ENCODE measurements at regions of chr11 and their contacts with region 1.

Region 1: DNA sequence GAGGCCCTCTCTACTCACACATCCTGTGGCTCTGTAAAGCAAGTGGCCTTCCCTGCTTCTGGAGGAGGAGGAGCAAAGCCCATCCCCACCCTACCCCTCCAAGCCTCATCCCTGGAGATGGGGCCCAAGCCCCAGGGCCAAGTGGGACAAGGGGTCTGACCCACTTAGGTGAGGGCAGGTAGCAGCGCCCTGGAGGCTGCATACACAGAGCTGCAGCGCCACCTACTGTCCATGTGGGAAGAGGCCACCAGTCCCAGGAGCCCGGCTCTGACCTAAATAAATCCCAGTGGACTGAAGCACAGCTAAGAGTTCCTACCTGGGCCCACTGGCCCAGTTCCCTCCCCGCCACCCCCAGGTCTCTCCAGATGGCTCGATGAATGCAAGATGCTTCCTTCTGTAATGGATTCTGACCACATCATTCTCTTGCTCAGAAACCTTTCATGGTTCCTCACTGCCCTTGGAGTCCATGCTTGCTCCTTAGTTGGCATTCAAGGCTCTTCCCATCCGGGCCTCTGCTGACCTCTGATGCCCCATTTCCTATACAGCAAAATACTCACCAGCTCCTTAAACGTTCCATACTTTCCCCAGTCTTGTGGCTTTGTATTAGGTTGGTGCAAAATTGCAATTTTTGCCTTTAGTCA is 62.1 kb downstream of the THAP12 start:
- DNase-seq: peak; percentile 89
- ATAC-seq: peak; percentile 97
- H3K4me3 ChIP-seq: no peak overlapping the region
- H3K27ac ChIP-seq: no peak overlapping the region
- H3K4me1 ChIP-seq: peaks cover 11% of the 10 kb centered on the region
- H3K27me3 ChIP-seq: no peaks in the 10 kb centered on the region
- CTCF ChIP-seq: peak; percentile 98

Region 2: GRCh38 chr11:75532200-75533048 is 786.4 kb before region 1 on chr11:
- CTCF ChIA-PET with region 1: no interaction called
- POLR2A ChIA-PET with region 1: interaction called, 25 read pairs
- intact Hi-C with region 1: no loop called
- DNase-seq: peak; percentile 93
- ATAC-seq: peak; percentile 52
- H3K4me3 ChIP-seq: no peak overlapping the region; the same call in 1 of the 2 replicates
- H3K27ac ChIP-seq: no peak overlapping the region
- H3K4me1 ChIP-seq: peaks cover 33% of the 10 kb centered on the region
- H3K27me3 ChIP-seq: no peaks in the 10 kb centered on the region
- CTCF ChIP-seq: peak; percentile 93

Region 3: DNA sequence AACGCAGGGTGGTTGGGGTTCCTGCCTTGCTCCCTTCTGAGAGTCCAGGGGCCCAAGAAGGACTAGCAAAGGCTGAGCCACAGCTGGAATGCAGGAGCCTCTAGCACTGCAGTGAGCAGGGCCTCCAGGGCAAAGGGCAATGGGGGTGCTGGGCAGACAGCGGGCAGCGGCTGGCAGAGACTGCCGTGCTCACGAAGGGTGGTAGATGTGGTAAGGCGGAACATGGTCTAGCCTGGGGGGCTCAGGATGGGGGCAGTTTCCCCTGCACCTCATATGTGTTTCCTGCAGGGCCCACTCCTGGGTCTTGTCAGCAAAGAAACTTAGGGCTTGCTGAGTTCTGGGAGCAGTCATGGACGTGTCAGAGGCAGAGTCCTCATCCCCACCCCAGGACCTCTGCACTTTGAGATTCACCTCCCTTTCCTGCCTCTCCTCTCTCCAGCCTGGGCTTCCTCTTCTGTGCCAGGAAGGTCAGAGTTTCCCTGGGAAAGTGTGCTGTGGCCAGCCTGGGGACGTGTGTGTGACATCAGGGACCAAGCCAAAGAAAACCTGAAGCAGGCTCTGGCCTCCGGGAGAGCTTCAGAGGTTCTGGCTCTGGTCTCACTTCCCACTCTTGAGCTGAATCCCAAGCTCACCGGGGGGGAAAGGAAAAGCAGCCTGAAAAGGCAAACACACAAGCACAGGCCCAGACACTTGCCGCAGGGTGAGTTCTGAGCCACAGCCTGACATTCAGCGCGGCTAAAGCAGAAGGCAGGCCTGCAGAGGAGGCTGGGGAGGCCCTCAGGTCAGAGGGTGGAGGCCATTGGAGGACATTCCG is 596.8 kb before region 1 on chr11:
- CTCF ChIA-PET with region 1: no interaction called
- POLR2A ChIA-PET with region 1: no interaction called
- intact Hi-C with region 1: loop called (anchors 2 kb)
- DNase-seq: no peak
- ATAC-seq: no peak
- H3K4me3 ChIP-seq: no peak overlapping the region
- H3K27ac ChIP-seq: no peak overlapping the region
- H3K4me1 ChIP-seq: no peaks in the 10 kb centered on the region
- H3K27me3 ChIP-seq: no peaks in the 10 kb centered on the region
- CTCF ChIP-seq: no peak

Region 4: DNA sequence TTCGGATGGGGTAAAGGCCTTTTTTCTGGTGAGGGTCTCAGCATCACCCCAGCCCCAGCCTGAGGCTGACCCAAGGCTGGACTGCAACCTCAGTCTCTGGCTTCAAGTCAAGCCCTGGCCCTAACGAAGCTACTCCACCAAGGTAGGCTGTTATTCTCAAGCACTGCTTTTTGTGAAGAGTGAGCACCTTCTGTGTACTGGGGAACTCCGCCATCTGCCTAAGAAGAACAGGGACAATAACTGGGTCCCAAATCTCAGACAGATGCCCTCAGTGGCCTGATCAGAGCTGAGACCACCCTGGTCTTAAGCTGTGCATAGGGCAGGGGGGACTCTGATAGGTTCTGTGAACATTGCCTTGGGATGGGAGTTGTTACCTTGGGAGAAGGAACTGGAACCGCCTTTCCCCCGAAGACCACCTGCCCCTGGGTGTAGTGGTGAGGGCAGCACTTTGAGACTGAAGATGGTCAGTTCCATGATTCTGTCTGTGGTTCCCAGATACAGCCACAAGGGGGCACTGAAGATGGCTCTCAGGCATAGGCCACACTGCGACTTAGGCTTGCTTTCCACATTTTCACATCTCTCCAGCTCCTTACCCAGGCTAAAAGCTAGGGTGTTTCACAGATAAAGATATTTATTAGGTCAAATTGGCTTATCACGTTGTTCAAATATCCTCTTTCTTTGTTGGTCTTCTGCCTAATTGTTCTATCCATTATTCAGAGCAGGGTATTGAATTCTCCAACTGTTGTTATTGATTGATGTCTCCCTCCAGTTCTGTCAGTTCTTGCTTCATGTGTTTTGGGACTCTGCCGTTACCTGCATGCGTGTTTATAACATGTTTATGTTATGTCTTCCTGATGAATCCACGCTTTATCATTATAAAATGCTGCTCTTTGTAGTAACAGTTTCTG is 515.7 kb before region 1 on chr11:
- CTCF ChIA-PET with region 1: no interaction called
- POLR2A ChIA-PET with region 1: no interaction called
- intact Hi-C with region 1: loop called (anchors 2 kb)
- DNase-seq: peak; percentile 84
- ATAC-seq: peak; percentile 96
- H3K4me3 ChIP-seq: no peak overlapping the region
- H3K27ac ChIP-seq: no peak overlapping the region
- H3K4me1 ChIP-seq: peaks cover 9% of the 10 kb centered on the region; the same call in 1 of the 2 replicates
- H3K27me3 ChIP-seq: no peaks in the 10 kb centered on the region
- CTCF ChIP-seq: peak; percentile 97

Region 5: DNA sequence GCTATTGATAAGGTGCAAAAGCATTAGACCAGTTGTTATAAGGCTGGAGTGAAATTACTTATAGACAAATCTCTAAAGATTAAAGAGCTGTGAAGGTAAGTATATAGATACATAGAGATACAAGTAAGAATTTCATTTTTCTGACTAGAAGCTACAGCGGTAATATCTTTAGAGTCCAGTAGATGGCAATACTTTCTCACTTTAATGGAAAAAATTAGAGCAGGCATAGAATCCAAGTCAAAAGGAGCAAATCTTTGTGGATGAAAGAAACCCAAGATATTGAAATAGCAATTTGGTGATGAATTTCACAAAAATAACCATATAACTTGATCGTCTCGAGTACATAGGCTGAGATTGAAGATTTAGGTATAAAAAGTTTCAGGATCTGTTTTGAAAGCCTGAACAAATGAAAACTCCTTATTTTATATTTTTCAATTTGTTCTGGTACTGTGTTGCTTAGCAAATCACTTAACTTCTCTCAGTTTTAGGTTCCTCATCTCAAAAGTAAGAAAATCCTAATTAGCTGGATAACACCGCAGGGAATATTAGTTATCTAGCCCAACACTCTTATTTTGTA is 421.9 kb before region 1 on chr11:
- CTCF ChIA-PET with region 1: no interaction called
- POLR2A ChIA-PET with region 1: no interaction called
- intact Hi-C with region 1: loop called (anchors 2 kb)
- DNase-seq: peak; percentile 82
- ATAC-seq: peak; percentile 63; the same call in 1 of the 2 replicates
- H3K4me3 ChIP-seq: no peak overlapping the region
- H3K27ac ChIP-seq: no peak overlapping the region
- H3K4me1 ChIP-seq: no peaks in the 10 kb centered on the region
- H3K27me3 ChIP-seq: no peaks in the 10 kb centered on the region
- CTCF ChIP-seq: peak; percentile 93

Region 6: GRCh38 chr11:76207642-76208401 is 111.0 kb before region 1 on chr11:
- CTCF ChIA-PET with region 1: interaction called, 17 read pairs
- POLR2A ChIA-PET with region 1: no interaction called
- intact Hi-C with region 1: loop called (anchors 1 kb)
- DNase-seq: peak; percentile 93
- ATAC-seq: peak; percentile 56
- H3K4me3 ChIP-seq: peak overlapping the region; percentile 67
- H3K27ac ChIP-seq: no peak overlapping the region
- H3K4me1 ChIP-seq: peaks cover 32% of the 10 kb centered on the region
- H3K27me3 ChIP-seq: peaks cover 49% of the 10 kb centered on the region
- CTCF ChIP-seq: peak; percentile 94

Region 7: GRCh38 chr11:76512851-76513653 is 194.2 kb after region 1 on chr11:
- CTCF ChIA-PET with region 1: no interaction called
- POLR2A ChIA-PET with region 1: no interaction called
- intact Hi-C with region 1: loop called (anchors 5 kb)
- DNase-seq: peak; percentile 42
- ATAC-seq: peak; percentile 18; the same call in 1 of the 2 replicates
- H3K4me3 ChIP-seq: no peak overlapping the region
- H3K27ac ChIP-seq: no peak overlapping the region
- H3K4me1 ChIP-seq: no peaks in the 10 kb centered on the region
- H3K27me3 ChIP-seq: no peaks in the 10 kb centered on the region
- CTCF ChIP-seq: peak; percentile 76

Region 8: DNA sequence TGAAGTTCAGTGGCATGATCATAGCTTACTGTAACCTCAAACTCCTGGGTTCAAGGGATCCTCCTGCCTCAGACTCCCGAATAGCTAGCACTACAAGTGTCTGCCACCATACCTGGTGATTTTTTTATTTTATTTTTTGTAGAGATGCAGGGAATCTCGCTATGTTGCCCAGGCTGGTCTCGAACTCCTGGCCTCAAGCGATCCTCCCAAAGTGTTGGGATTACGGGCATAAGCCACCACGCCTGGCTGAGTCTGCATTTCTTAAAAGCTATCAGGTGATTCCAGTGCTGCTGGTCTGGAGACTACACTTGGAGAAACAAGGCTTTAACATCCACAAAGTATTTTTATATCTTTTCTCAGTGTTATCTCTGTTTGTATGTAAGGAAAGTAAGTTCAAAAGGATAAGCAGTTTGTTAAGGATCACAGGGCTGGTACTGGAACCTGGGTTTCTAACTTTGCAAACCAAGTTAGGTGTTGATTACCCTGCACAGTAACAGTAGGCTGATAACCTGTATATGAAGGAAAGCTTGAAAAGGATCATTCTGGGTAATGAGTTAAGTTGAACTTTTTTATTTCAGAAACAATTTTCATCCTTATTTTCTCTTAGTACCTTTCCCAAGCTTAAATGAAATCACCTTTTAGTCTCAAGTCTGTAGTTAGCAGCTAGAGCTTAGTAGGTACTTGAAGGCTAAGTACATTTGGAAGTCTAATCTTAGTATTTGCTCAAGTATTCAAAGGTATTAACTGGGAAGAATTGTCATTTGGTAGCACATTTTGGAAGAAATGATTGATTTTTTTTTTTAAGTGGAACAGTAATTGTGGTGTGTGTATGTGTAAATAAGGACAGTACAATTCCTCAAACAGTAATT is 554.3 kb after region 1 on chr11:
- CTCF ChIA-PET with region 1: no interaction called
- POLR2A ChIA-PET with region 1: no interaction called
- intact Hi-C with region 1: no loop called
- DNase-seq: no peak
- ATAC-seq: no peak
- H3K4me3 ChIP-seq: no peak overlapping the region
- H3K27ac ChIP-seq: no peak overlapping the region
- H3K4me1 ChIP-seq: no peaks in the 10 kb centered on the region
- H3K27me3 ChIP-seq: no peaks in the 10 kb centered on the region
- CTCF ChIP-seq: no peak